ENCODE measurements at regions of chr2 and their contacts with region 1.

Region 1: DNA sequence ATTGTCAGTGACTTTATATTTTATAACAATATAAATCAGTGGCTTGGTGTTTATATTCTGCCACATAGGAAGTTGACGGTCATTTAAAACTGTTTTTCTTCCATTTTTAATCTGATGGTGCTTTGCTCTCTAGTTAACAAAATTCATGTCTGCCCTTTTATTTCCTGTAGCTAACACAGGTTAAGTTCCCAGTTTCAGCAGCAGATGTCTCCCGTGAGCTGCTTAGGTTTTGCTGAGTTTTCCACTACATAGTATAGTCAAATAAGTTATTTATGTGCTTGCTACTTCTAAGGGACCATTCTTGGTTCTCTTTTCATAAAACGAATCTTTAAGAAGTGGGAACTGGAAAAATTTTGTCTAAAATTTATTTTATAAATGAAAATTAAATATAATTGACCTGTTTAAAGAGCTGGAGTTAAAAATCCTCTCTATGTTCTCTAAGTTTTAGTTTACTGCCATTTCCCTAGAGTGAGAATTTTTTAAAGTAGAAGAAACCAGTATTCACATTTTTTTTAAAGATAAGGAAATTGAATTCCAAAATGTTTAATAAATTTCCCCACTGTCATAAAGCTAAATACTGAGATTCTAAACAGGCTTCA is 20.6 kb downstream of the HTR2B start:
- DNase-seq: peak in 40 of 42 donors; percentile 41 to 87 (median 68)

Region 2: DNA sequence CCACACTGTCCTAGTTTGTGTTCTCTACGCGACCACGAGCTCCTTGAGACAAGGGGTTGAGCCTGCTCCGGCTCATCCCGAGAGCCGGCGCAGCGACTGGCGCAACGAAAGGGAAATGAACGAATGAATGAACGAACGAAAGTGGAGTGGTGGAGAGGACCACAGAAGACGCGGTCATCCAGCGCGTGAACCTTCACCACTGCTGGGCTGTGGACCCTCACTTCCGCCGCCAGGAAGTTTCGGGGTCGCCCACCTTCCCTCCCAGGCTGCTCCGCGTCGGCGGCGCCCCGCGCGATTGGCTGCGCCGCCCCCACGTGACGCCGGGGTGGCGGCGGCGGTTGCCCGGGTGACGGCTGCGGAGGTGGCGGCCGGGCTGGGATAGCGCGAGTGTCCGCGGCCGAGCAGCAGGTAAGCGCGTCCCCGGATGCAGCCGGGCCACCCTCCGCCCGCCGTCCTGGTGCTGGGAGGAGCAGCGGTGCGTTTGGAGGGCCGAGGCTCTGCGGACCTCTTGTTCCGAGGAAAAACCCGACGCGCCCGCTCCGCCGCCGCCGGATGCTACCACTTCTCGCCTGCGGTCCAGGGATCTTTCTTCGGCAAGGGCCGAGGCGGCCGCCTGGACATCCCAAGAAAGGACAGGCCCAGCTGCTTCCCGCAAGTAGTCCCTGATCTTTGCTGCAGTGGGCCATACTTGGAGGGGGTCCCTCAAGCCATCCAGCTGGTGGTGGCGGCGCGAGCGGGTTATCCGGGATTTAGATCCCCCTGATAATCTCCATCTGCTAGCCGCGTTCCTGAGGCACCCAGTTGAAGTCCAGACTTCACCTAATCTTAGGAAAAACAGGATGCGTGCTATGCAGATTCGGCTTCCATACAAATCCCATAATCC is 94.3 kb after region 1 on chr2 and contains the start of gene ARMC9:
- intact Hi-C with region 1: loop called (anchors 10 kb)
- DNase-seq: peak; percentile 26 to 92 (median 84)

Region 3: GRCh38 chr2:231452799-231453508 is 348.7 kb after region 1 on chr2:
- intact Hi-C with region 1: loop called (anchors 10 kb)
- DNase-seq: peak in 2 of 42 donors; percentile 9 to 15